ENCODE measurements at regions of chr11 and their contacts with region 1.

Region 1: GRCh38 chr11:68297812-68298658 is 14.4 kb upstream of the LRP5 start:
- DNase-seq: peak; percentile 92
- H3K4me3 ChIP-seq: peak overlapping the region in 1 of 2 experiments; percentile 34; a peak in 1 of 4 replicates
- H3K27ac ChIP-seq: no peak overlapping the region
- H3K4me1 ChIP-seq: peaks cover 0 to 7% of the 10 kb centered on the region in 2 experiments; a peak in 2 of 4 replicates
- H3K27me3 ChIP-seq: no peaks in the 10 kb centered on the region
- CTCF ChIP-seq: peak; percentile 92
- EP300 ChIP-seq: no peak
- RAD21 ChIP-seq: peak; percentile 89

Region 2: DNA sequence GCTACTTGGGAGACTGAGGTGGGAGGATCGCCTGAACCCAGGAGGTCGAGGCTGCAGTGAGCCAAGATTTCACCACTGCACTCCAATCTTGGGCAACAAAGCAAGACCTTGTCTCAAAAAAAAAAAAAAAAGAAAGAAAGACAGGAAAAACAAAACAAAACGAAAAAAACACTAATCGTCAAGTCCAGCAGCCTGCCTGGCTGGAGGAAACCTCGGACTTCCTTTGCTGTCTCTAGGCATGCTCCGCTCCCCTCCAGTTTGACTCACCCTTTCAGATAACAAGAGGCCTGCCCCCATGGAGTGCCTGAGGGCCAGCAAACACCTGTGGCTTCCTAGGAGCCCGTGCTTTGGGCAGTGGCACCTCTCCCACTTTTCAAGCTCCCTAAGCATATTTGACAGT is 148.0 kb before region 1 on chr11:
- CTCF ChIA-PET with region 1: no interaction called
- POLR2A ChIA-PET with region 1: no interaction called
- DNase-seq: no peak
- H3K4me3 ChIP-seq: no peak overlapping the region
- H3K27ac ChIP-seq: no peak overlapping the region
- H3K4me1 ChIP-seq: peaks cover 0 to 20% of the 10 kb centered on the region in 2 experiments; a peak in 1 of 4 replicates
- H3K27me3 ChIP-seq: no peaks in the 10 kb centered on the region
- CTCF ChIP-seq: no peak
- EP300 ChIP-seq: no peak
- RAD21 ChIP-seq: no peak

Region 3: GRCh38 chr11:68266121-68266891 is 31.7 kb before region 1 on chr11:
- CTCF ChIA-PET with region 1: interaction called, 68 read pairs
- POLR2A ChIA-PET with region 1: no interaction called
- DNase-seq: no peak
- H3K4me3 ChIP-seq: no peak overlapping the region
- H3K27ac ChIP-seq: no peak overlapping the region
- H3K4me1 ChIP-seq: peaks cover 11 to 15% of the 10 kb centered on the region in 2 experiments; a peak in 3 of 4 replicates
- H3K27me3 ChIP-seq: no peaks in the 10 kb centered on the region
- CTCF ChIP-seq: no peak
- EP300 ChIP-seq: no peak
- RAD21 ChIP-seq: no peak

Region 4: GRCh38 chr11:68287419-68287818 is 10.6 kb before region 1 on chr11:
- CTCF ChIA-PET with region 1: interaction called, 42 read pairs
- POLR2A ChIA-PET with region 1: no interaction called
- DNase-seq: no peak
- H3K4me3 ChIP-seq: no peak overlapping the region
- H3K27ac ChIP-seq: no peak overlapping the region
- H3K4me1 ChIP-seq: no peaks in the 10 kb centered on the region
- H3K27me3 ChIP-seq: no peaks in the 10 kb centered on the region
- CTCF ChIP-seq: no peak
- EP300 ChIP-seq: no peak
- RAD21 ChIP-seq: no peak

Region 5: DNA sequence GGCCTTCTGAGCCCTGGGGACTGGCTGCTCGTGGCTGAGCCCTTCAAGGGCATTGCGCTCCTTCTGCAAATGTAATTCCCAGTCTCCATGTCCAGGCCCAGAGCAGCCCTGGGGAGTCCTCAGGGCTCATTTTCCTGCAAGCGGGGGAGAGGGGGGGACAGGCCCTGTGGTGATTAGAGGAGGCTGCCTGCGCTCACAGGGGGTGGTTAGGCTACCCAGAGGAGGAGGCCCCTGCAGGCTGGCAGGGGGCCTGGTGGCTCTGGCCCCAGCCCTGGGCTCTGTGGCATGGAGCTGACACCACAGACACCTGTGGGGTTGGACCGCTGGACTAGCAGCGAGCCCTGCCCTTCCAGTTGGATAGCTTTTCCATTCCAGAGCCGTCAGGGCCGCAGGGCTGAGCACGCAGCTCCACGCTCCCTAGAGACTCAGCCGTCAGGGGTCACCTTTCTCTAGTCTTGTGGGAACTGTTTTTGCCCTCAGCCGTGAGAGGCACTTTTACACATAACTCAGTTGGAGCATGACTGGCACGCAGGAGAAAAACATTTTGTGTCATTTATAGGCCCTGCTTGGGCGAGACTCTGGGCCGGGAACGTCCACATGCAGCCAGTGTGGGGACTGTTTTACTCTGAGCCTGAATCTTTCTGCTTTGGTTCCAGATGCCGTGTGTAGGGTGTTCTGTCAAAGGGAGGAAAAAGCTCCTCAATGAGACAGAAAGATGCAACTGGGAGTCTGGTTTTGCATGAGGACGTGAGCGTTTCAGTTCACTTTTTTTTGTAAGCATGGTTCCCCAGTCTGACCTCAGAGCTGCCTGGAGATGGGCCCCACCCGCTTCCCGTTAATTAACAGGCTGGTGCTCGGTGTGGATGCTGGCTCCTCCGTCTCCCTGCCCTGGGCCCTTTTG is 72.4 kb after region 1 on chr11:
- CTCF ChIA-PET with region 1: interaction called, 16 read pairs
- POLR2A ChIA-PET with region 1: interaction called, 3 read pairs
- DNase-seq: peak; percentile 69
- H3K4me3 ChIP-seq: no peak overlapping the region
- H3K27ac ChIP-seq: peak overlapping the region in 1 of 2 experiments; percentile 100; a peak in 2 of 4 replicates
- H3K4me1 ChIP-seq: peaks cover 23 to 62% of the 10 kb centered on the region in 2 experiments
- H3K27me3 ChIP-seq: no peaks in the 10 kb centered on the region
- CTCF ChIP-seq: no peak
- EP300 ChIP-seq: no peak
- RAD21 ChIP-seq: no peak; the same call in 1 of the 2 replicates

Region 6: DNA sequence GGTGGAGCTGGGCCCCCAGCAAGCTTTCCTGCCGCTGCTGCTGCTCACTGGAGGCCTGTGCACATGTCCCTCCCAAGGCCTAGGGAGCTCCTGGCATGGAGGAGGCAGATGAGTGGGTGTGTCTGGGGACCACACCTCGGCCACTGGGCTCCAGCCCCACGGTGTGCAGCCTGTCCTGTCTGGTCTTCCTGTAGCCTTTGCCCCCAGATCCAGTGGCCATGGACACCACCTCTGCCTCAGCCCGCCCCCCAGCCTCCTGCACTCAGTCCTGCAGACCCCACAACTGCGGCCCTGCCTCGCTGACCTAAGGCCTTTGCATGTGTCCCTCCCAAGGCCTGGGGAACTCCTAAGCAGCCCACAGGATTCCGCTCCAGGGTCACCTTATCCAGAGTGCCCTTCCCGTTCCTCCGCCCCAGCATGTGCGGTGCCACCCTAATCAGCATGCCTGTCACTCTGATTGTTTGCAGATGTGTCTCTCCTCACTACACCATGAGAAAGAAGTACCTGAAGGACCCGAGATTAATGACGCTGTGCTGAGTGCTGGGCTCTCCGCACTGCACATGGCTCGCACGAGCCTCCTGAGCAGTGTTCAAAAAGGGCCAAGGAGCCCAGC is 394.9 kb after region 1 on chr11:
- CTCF ChIA-PET with region 1: no interaction called
- POLR2A ChIA-PET with region 1: no interaction called
- DNase-seq: no peak
- H3K4me3 ChIP-seq: no peak overlapping the region
- H3K27ac ChIP-seq: no peak overlapping the region
- H3K4me1 ChIP-seq: peaks cover 0 to 19% of the 10 kb centered on the region in 2 experiments; a peak in 1 of 4 replicates
- H3K27me3 ChIP-seq: peaks cover 6% of the 10 kb centered on the region
- CTCF ChIP-seq: no peak
- EP300 ChIP-seq: no peak
- RAD21 ChIP-seq: no peak

Measured in SK-N-SH (cell line).